Cardiac septum (tissue), 1 donor: ENCODE measurements at regions of chr11 and their contacts with region 1.

Region 1: DNA sequence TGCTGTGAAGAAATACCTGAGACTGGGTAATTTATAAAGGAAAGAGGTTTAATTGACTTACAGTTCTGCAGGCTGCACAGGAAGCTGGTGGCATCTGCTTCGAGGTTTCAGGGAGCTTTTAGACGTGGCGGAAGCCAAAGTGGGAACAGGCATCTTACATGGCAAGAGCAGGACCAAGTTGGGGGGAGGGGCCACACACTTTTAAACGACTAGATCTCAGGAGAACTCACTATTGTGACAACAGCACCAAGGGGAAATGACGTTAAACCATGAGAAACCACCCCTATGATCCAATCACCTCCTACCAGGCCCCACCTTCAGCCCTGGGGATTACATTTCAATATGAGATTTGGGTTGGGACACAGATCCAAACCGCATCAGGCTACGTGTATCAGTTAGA is 11.1 kb upstream of the SCGB1D4 start:
- DNase-seq: no peak

Region 2: GRCh38 chr11:62169935-62170548 is 139.9 kb before region 1 on chr11:
- intact Hi-C with region 1: loop called (anchors 2 kb)
- DNase-seq: no peak

Region 3: DNA sequence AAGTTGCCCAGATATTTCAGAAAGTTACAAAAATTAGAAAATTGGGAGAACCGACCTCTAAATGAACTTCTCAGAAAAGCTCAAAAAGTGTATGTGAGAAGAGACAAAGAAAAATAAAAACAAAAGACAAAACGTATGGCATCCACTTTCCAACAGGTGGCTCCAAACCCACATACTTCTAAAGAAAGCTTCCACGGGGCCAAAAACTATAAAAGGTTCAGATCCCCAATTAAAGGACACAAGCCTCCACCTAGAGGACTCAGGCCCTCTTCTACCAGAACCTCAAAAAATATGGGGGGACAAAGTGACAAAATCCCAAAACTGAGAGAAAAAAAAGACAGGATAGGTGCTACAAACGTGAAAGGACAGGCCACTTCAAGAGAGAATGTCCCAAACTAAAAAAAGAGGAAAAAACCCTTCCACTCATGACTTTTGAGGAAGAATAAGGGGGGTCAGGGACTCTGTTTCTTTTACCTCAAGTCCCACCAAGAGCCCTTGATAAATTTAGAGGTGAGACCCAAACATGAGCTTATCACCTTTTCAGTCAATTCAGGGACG is 92.7 kb before region 1 on chr11:
- intact Hi-C with region 1: loop called (anchors 5 kb)
- DNase-seq: no peak

Region 4: GRCh38 chr11:62266558-62266957 is 43.4 kb before region 1 on chr11:
- intact Hi-C with region 1: no loop called
- DNase-seq: no peak

Region 5: GRCh38 chr11:62353844-62354243 is 43.9 kb after region 1 on chr11:
- intact Hi-C with region 1: no loop called
- DNase-seq: no peak